ENCODE measurements at regions of chr2 and their contacts with region 1.

Region 1: GRCh38 chr2:121596221-121597080 is 52.8 kb downstream of the CLASP1 start:
- DNase-seq: peak in 1 of 2 donors; percentile 47
- ATAC-seq: peak; percentile 49 to 81 (median 76)
- H3K4me3 ChIP-seq: peak overlapping the region in 6 of 10 donors; percentile 5 to 38 (median 16)
- H3K27ac ChIP-seq: peak overlapping the region; percentile 2 to 85 (median 62)
- H3K4me1 ChIP-seq: peaks cover 2 to 55% (median 37%) of the 10 kb centered on the region in 9 donors
- H3K27me3 ChIP-seq: no peaks in the 10 kb centered on the region
- CTCF ChIP-seq: peak; percentile 22 to 76 (median 54)

Region 2: GRCh38 chr2:121539750-121540469 is 56.5 kb before region 1 on chr2:
- intact Hi-C with region 1: loop called in 3 of 10 experiments (anchors 5 to 10 kb)
- DNase-seq: no peak
- ATAC-seq: no peak
- H3K4me3 ChIP-seq: no peak overlapping the region
- H3K27ac ChIP-seq: peak overlapping the region in 2 of 10 donors; percentile 32 to 40
- H3K4me1 ChIP-seq: peaks cover 3 to 80% (median 59%) of the 10 kb centered on the region in 9 donors
- H3K27me3 ChIP-seq: no peaks in the 10 kb centered on the region
- CTCF ChIP-seq: no peak

Region 3: DNA sequence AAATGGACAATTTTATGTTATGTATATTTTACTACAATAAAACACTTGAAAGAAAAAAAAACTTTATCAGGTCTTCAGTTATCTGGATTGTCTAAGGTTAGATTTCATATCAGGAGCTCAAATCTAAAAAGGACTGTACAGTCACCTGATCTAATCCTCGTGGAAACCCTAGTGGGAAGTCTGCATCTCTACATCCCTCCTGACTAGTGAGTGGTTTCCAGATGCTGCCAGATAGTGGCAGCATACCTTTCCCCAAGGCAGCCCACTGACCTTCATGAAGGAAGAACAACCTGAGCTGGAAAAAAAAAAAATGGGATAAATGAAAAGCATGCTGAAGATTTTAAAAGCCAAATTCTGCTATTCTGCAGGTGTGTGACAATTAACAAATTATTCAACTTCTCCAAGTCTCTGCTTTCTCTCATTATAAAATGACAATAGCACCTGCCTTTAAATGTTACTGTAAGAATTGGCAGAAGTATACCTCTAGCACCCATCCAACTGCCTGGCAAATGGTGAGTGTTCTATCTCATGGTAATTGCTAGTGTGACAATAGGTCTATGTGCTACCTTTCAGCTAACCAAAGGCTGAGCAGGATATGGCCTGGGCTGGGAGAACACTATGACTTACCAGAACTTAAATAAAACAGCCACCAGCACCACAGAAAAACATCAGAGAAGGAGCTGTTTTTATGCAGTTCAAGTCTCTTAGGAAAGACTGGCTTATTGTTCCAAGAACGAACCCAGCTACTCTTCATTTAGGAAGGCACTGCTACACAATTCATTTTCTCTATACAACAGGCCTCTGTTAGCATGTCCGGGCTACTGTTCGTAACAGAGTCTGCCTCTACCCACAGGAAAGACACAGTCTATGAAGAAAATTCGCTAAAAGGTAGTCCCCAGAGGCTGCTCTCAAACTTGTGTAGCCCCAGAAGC is 44.2 kb after region 1 on chr2:
- intact Hi-C with region 1: loop called in 5 of 10 experiments (anchors 5 to 10 kb)
- DNase-seq: no peak
- ATAC-seq: peak in 2 of 8 donors; percentile 31 to 48
- H3K4me3 ChIP-seq: no peak overlapping the region
- H3K27ac ChIP-seq: peak overlapping the region in 2 of 10 donors; percentile 1 to 7
- H3K4me1 ChIP-seq: peaks cover 0 to 56% (median 35%) of the 10 kb centered on the region in 9 donors
- H3K27me3 ChIP-seq: no peaks in the 10 kb centered on the region
- CTCF ChIP-seq: no peak

Region 4: DNA sequence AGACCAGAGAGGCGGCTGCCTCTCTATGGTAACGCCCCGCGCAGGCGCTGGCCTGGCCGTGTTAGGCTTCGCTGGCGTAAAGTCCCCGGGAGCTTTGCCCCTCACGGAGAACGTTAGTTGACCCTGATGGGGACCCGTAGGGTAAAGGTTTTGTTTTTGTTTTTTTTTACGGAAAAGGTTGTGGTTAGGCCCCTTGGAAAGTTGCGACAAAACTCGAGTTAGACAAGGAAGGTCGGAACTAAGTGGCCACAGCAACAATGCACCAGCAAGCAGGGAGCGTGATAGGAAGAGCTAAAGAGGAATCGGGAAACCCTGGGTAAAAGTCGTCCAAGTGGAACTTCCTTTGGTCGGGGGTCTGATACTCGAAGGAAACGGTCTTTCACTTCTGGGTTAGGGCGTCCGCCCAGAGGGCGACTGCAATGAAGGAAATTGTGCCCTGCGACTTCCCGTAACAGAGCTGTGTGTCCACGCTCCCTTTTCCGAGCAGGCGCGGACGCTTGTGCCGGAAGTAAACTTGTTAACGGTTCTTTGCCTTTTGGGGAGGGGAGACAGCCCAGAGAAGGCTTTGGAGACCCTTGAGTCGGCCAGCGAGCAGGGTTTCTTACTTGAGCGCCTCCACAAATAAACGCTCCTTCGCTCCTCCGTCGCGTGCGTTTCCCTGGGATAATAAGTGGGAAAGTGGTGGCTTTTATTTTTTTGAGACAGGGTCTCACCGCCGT is 53.3 kb after region 1 on chr2:
- intact Hi-C with region 1: loop called in 8 of 10 experiments (anchors 1 to 10 kb)
- DNase-seq: peak; percentile 95 to 97
- ATAC-seq: peak; percentile 98 to 99 (median 98)
- H3K4me3 ChIP-seq: peak overlapping the region; percentile 62 to 96 (median 90)
- H3K27ac ChIP-seq: peak overlapping the region; percentile 86 to 100 (median 96)
- H3K4me1 ChIP-seq: peaks cover 8 to 68% (median 55%) of the 10 kb centered on the region in 9 donors
- H3K27me3 ChIP-seq: no peaks in the 10 kb centered on the region
- CTCF ChIP-seq: no peak

Region 5: GRCh38 chr2:121710470-121711170 is 114.2 kb after region 1 on chr2:
- intact Hi-C with region 1: loop called in 4 of 10 experiments (anchors 5 to 10 kb)
- DNase-seq: no peak
- ATAC-seq: no peak
- H3K4me3 ChIP-seq: no peak overlapping the region
- H3K27ac ChIP-seq: no peak overlapping the region
- H3K4me1 ChIP-seq: peaks cover 0 to 1% (median 0%) of the 10 kb centered on the region in 9 donors
- H3K27me3 ChIP-seq: no peaks in the 10 kb centered on the region
- CTCF ChIP-seq: no peak